Activated T-helper 2 cell treated with anti-CD3 and anti-CD28 coated beads, Interferon-gamma antibody, Interleukin-2, Interleukin-4, amounts not matched to agents 10 μg/mL and 5 μg/mL and 100 μg/mL, durations not matched to agents 14 hours and 24 hours and 36 hours (primary cell): ENCODE measurements at regions of chr20 and their contacts with region 1.

Region 1: GRCh38 chr20:50546729-50547314 is 36.6 kb downstream of the PTPN1 start:
- DNase-seq: no peak
- H3K4me3 Mint-ChIP-seq: peak overlapping the region; percentile 72
- H3K27ac Mint-ChIP-seq: peak overlapping the region; percentile 86
- H3K4me1 Mint-ChIP-seq: peaks cover 53% of the 10 kb centered on the region
- H3K27me3 Mint-ChIP-seq: no peaks in the 10 kb centered on the region

Region 2: GRCh38 chr20:50516180-50516934 is 30.5 kb before region 1 on chr20:
- intact Hi-C with region 1: loop called (anchors 2 kb)
- DNase-seq: no peak
- H3K4me3 Mint-ChIP-seq: peak overlapping the region; percentile 62
- H3K27ac Mint-ChIP-seq: peak overlapping the region; percentile 95
- H3K4me1 Mint-ChIP-seq: peaks cover 86% of the 10 kb centered on the region
- H3K27me3 Mint-ChIP-seq: no peaks in the 10 kb centered on the region

Region 3: GRCh38 chr20:50528804-50529351 is 17.9 kb before region 1 on chr20:
- intact Hi-C with region 1: no loop called
- DNase-seq: no peak
- H3K4me3 Mint-ChIP-seq: no peak overlapping the region
- H3K27ac Mint-ChIP-seq: peak overlapping the region; percentile 59
- H3K4me1 Mint-ChIP-seq: peaks cover 31% of the 10 kb centered on the region
- H3K27me3 Mint-ChIP-seq: no peaks in the 10 kb centered on the region

Region 4: GRCh38 chr20:50575847-50576720 is 29.3 kb after region 1 on chr20:
- intact Hi-C with region 1: no loop called
- DNase-seq: peak; percentile 44
- H3K4me3 Mint-ChIP-seq: no peak overlapping the region
- H3K27ac Mint-ChIP-seq: no peak overlapping the region
- H3K4me1 Mint-ChIP-seq: peaks cover 25% of the 10 kb centered on the region
- H3K27me3 Mint-ChIP-seq: no peaks in the 10 kb centered on the region